Adrenal gland (tissue), 19 donors: ENCODE measurements at regions of chr17 and their contacts with region 1.

Region 1: GRCh38 chr17:42720996-42721583 is 23.8 kb downstream of the EZH1 start:
- DNase-seq: peak in 2 of 7 donors; percentile 24 to 45
- H3K4me3 ChIP-seq: no peak overlapping the region
- H3K27ac ChIP-seq: no peak overlapping the region
- H3K4me1 ChIP-seq: no peaks in the 10 kb centered on the region
- H3K27me3 ChIP-seq: no peaks in the 10 kb centered on the region
- CTCF ChIP-seq: peak; percentile 35 to 77 (median 69)
- POLR2A ChIP-seq: no peak

Region 2: DNA sequence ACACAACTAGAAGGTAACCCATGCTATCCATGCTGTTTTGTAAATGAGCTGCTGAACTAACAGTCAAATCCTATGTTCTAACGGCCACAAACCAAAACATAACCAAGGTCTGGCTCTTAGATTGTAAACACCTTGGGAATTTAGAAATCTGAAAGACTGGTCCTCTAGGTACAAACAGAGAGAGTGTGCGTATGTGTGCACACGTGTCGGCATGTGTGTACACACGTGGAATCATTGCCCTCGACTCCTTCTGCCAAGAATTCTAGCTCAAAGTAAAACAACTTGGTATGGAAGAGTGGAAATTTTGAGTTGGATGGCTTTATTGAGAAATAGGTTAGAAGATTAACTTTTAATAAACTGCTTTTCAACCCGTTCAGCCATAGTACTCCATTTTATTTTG is 508.7 kb before region 1 on chr17:
- intact Hi-C with region 1: no loop called
- DNase-seq: peak in 5 of 7 donors; percentile 44 to 68 (median 58)
- H3K4me3 ChIP-seq: no peak overlapping the region
- H3K27ac ChIP-seq: peak overlapping the region; percentile 50 to 80 (median 67)
- H3K4me1 ChIP-seq: peaks cover 10 to 20% of the 10 kb centered on the region in 2 donors
- H3K27me3 ChIP-seq: no peaks in the 10 kb centered on the region
- CTCF ChIP-seq: no peak
- POLR2A ChIP-seq: no peak

Region 3: DNA sequence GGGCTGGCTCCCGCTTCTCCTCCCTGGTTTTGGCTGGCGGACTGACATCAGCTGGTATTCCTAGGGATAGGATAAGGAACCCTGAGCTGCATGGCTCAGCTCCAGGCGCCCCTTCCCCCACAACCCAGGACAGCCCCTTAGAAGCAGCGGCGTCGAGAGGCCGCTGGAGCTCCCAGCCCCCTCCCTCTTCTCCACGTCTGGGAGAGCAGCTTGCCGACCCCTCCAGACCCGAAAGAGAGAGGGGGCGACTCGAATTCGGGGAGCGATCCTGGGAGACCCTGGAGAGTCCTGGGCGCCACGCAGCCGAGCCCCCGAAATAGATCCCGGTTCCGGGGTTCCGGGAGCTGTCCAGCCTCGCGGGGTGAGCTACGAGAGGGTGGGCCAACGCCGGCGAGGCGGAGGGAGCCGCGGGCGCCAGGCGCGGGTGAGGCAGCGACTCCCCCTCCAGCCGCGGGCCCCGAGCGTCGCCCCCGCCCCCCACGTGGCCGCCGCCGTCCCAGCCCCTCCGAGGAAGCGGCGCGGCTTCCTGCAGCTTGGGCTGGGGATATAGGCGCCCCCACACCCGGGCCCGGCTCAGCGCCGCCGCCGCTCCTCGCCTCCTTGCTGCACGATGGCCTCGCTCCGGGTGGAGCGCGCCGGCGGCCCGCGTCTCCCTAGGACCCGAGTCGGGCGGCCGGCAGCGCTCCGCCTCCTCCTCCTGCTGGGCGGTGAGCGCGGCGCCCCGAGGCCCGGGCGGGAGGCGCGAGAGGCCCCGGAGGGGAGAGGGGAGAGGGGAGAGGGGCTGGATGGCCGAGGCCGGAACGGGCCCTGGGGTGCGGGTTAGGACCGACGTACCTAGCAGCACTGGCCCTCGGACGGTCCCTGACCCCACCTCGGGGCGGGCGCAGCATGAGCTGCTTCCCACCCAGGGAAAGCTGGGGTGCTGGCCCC is 39.8 kb after region 1 on chr17 and contains the start of gene RAMP2:
- intact Hi-C with region 1: loop called (anchors 5 kb)
- DNase-seq: peak in 2 of 7 donors; percentile 32 to 41
- H3K4me3 ChIP-seq: peak within 1 kb of the TSS in 2 of 4 donors; percentile 13 to 59
- H3K27ac ChIP-seq: peak within 1 kb of the TSS in 1 of 5 donors; percentile 59
- H3K4me1 ChIP-seq: peaks cover 9 to 17% of the 10 kb centered on the region in 2 donors
- H3K27me3 ChIP-seq: no peaks in the 10 kb centered on the region
- CTCF ChIP-seq: no peak
- POLR2A ChIP-seq: no peak
- total RNA-seq, gene RAMP2: 4.6 to 35.4 (median 16.1) TPM

Region 4: GRCh38 chr17:42819944-42820535 is 99.0 kb after region 1 on chr17:
- intact Hi-C with region 1: loop called (anchors 5 to 10 kb)
- DNase-seq: peak in 5 of 7 donors; percentile 27 to 70 (median 61)
- H3K4me3 ChIP-seq: no peak overlapping the region
- H3K27ac ChIP-seq: no peak overlapping the region
- H3K4me1 ChIP-seq: peaks cover 10 to 21% of the 10 kb centered on the region in 2 donors
- H3K27me3 ChIP-seq: no peaks in the 10 kb centered on the region
- CTCF ChIP-seq: peak; percentile 16 to 57 (median 38)
- POLR2A ChIP-seq: no peak